Caco-2 (cell line): ENCODE measurements at regions of chr12 and their contacts with region 1.

Region 1: DNA sequence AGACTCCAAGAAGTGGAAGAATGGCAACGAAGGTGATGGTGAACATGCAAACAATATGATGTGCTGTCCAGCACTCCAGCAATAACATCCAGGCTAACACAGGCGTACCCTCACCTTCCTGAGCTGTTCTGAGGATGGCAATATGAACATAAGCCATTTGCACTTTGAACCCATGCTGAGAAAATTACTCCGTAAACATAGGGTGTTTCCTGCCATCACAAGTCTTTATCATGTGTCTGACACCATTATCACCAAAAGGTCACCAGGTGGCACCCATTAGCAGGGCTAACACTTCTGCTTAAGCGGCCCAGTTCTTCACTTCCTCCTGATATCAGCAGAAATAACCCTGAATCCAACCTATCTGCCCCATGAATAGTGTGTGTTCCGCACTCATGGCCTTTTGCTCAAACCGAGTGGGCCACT is 482.8 kb downstream of the MED13L start:
- DNase-seq: peak; percentile 9 to 32
- H3K4me3 ChIP-seq: no peak overlapping the region
- H3K4me3 Mint-ChIP-seq: no peak overlapping the region
- H3K27ac Mint-ChIP-seq: no peak overlapping the region
- H3K4me1 ChIP-seq: 0 out of 2 replicates have a peak, but pooled peaks cover 4% of the 10 kb centered on the region
- H3K4me1 Mint-ChIP-seq: peaks cover 7% of the 10 kb centered on the region
- H3K27me3 ChIP-seq: no peaks in the 10 kb centered on the region
- H3K27me3 Mint-ChIP-seq: peaks cover 11% of the 10 kb centered on the region
- CTCF ChIP-seq: no peak

Region 2: DNA sequence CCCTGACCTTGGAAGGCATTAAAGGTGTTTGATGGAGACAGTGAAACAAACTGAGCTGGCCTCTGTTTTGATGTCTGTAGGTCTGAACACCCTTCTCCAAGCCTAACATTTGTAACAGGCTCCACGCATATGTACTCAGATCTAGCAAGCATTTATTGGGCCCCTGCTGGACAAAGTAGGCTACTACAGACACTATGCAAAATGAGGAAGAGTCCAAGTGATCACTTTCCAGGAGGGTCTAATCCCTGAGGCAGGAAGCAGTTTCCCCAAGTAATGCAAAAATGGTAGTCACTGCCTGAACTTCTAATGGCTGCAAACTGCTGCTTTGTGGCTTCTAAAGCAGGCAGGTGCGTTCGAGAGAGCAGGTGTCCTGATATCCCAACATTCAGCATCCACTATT is 77.0 kb after region 1 on chr12:
- CTCF ChIA-PET with region 1: no interaction called
- POLR2A ChIA-PET with region 1: no interaction called
- intact Hi-C with region 1: loop called (anchors 2 kb)
- DNase-seq: peak; percentile 39 to 48
- H3K4me3 ChIP-seq: no peak overlapping the region
- H3K4me3 Mint-ChIP-seq: no peak overlapping the region
- H3K27ac Mint-ChIP-seq: peak overlapping the region; percentile 27
- H3K4me1 ChIP-seq: peaks cover 22% of the 10 kb centered on the region
- H3K4me1 Mint-ChIP-seq: peaks cover 26% of the 10 kb centered on the region
- H3K27me3 ChIP-seq: no peaks in the 10 kb centered on the region
- H3K27me3 Mint-ChIP-seq: no peaks in the 10 kb centered on the region
- CTCF ChIP-seq: peak; percentile 54 to 59

Region 3: DNA sequence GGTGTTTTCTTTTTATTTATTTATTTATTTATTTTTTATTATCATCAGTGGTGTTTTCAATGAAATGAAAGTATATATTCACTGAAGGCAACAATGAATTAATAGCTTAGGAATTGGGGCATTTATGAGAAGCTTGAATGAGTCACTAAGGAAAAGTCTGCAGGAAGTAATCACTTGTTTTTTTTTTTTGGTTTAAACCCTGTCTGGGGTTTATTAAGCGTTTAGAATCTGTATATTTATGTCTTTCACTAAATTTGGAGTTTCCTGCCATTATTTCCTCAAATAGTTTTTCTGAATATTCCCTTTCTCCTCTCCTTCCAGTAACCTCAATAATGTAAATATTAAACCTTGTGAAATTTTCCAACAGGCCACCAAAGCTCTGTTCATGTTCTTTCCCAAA is 1219.1 kb after region 1 on chr12:
- CTCF ChIA-PET with region 1: no interaction called
- POLR2A ChIA-PET with region 1: no interaction called
- intact Hi-C with region 1: no loop called
- DNase-seq: no peak
- H3K4me3 ChIP-seq: no peak overlapping the region
- H3K4me3 Mint-ChIP-seq: no peak overlapping the region
- H3K27ac Mint-ChIP-seq: no peak overlapping the region
- H3K4me1 ChIP-seq: no peaks in the 10 kb centered on the region
- H3K4me1 Mint-ChIP-seq: no peaks in the 10 kb centered on the region
- H3K27me3 ChIP-seq: no peaks in the 10 kb centered on the region
- H3K27me3 Mint-ChIP-seq: no peaks in the 10 kb centered on the region
- CTCF ChIP-seq: no peak